Dendritic cell treated with granulocyte-macrophage colony-stimulating factor and Interleukin-4, amounts not matched to agents 40 ng/mL and 50 ng/mL, for 4 days (primary cell): ENCODE measurements at regions of chr7 and their contacts with region 1.

Region 1: GRCh38 chr7:102272075-102272917 is 14.4 kb upstream of the SH2B2 start:
- H3K4me3 Mint-ChIP-seq: no peak overlapping the region
- H3K27ac Mint-ChIP-seq: no peak overlapping the region
- H3K4me1 Mint-ChIP-seq: peaks cover 4% of the 10 kb centered on the region
- H3K27me3 Mint-ChIP-seq: no peaks in the 10 kb centered on the region

Region 2: DNA sequence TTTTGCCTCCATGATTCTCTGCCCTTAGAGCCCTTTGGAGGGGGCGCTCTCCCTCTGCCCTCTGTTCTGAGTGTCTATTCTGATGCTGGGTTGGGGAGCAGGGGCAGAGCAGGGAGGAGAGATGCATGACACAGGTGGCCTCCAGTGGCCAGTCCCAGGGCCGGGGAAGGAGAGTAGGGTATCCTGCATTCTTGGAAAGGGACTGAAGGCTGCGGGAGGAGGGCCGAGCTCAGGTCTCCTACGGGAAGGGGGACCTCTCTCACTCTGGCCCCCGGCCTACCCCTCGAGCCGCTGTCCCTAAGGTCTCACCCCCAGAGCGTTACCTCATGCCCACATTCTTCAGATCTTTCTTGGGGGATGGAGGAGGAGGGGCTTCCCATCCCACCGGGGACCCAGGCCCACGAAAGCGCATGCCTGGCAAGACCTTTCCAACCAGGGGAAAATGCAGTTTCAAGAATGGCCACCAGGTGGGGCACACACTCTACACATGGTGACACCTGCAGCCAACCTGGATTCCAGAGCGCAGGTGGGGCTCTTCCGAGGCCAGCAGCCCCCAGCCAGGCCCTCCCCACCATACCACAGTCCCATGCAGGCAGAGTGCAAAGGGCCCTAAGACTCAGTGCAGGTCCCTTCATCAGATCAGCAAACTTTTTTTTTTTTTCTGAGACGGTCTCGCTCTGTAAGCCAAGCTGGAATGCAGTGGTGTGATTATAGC is 729.6 kb before region 1 on chr7:
- intact Hi-C with region 1: loop called (anchors 1 kb)
- H3K4me3 Mint-ChIP-seq: no peak overlapping the region
- H3K27ac Mint-ChIP-seq: no peak overlapping the region
- H3K4me1 Mint-ChIP-seq: no peaks in the 10 kb centered on the region
- H3K27me3 Mint-ChIP-seq: peaks cover 5% of the 10 kb centered on the region

Region 3: DNA sequence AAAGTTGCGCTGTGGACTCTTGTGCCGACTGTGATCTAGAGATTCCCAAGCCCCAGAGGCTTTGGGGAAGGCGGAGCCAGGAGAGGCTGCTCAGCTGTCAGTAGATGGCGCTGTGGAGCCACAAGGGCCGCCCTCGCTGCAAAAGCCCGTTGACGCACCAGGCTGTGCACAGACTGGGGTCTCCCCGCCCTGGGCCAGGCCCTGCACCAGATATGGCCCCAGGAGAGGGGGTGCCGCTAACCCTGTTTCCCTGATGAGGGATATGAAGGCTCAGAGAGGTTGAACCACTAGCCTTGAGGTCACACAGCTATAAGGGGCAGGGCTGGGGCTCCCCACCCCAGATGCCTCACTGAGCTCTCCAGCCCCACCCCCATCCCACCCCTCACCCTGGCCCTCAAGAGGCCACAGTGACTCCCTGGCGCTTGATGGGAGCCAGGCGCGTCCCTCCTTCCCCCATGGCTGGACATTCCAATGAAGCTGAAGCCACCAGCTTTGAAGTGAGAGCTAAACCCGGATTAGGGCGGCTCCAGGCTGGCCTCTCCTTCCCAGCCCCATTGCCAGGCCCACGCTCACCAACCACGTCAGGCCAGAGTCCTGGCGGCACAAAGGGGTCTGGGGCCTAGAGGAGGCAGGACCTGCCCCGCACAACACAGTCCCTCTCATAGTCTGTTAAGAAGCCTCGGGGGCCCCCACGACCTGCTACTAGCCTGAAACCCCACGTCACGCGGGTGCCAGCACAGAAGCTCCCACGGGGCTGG is 669.6 kb before region 1 on chr7:
- intact Hi-C with region 1: loop called (anchors 5 kb)
- H3K4me3 Mint-ChIP-seq: no peak overlapping the region
- H3K27ac Mint-ChIP-seq: no peak overlapping the region
- H3K4me1 Mint-ChIP-seq: no peaks in the 10 kb centered on the region
- H3K27me3 Mint-ChIP-seq: peaks cover 11% of the 10 kb centered on the region

Region 4: GRCh38 chr7:102883098-102883860 is 611.0 kb after region 1 on chr7:
- intact Hi-C with region 1: no loop called
- H3K4me3 Mint-ChIP-seq: no peak overlapping the region
- H3K27ac Mint-ChIP-seq: no peak overlapping the region
- H3K4me1 Mint-ChIP-seq: peaks cover 19% of the 10 kb centered on the region
- H3K27me3 Mint-ChIP-seq: no peaks in the 10 kb centered on the region